Activated CD8-positive, alpha-beta T cell treated with anti-CD3 and anti-CD28 coated beads for 36 hours (primary cell): ENCODE measurements at regions of chr3 and their contacts with region 1.

Region 1: GRCh38 chr3:59386165-59386564 is 336.3 kb upstream of the CFAP20DC start:
- DNase-seq: peak; percentile 6
- ATAC-seq: peak; percentile 34
- H3K4me3 Mint-ChIP-seq: no peak overlapping the region
- H3K27ac Mint-ChIP-seq: peak overlapping the region; percentile 99
- H3K4me1 Mint-ChIP-seq: peaks cover 87% of the 10 kb centered on the region
- H3K27me3 Mint-ChIP-seq: no peaks in the 10 kb centered on the region
- CTCF ChIP-seq: no peak

Region 2: DNA sequence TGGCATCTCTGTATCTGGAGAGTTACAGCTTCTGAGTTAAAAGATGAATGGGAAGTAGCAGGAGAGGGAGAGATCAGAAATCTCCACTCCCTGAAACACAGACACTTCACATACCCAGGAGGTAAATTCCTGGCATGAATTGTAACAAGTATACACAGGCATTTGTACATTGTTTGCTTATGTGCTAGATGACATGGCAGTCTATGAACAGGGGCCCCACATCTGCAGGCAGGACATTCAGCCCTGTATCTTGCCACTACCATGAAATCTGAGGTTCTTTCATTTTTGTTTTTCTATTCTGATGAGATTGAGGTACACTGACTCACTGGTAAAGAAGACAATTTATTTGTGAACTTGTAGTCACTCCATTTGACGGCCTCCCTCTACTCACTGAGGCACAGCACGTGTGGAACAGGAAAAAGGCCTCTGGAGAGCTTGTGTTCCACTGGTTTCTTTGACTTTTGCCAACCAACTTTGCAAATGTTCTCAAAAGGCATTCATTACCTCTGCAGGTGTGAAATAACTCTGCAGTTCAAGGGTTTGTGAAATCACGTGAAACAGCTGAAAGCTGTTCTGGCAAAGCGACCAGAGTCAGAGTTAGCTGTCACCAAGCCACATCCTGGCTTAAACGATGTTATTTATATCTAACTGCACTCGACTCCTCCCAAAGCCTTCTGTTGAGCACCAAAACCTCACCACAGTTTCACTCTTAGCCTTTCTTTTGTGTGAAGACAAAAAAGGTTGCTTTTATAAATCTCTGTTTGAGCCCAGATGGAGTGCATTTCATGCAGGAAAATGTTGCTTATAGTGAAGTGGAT is 65.0 kb after region 1 on chr3:
- CTCF ChIA-PET with region 1: no interaction called
- POLR2A ChIA-PET with region 1: no interaction called
- intact Hi-C with region 1: loop called (anchors 5 kb)
- DNase-seq: peak; percentile 80
- ATAC-seq: peak; percentile 90
- H3K4me3 Mint-ChIP-seq: peak overlapping the region; percentile 55
- H3K27ac Mint-ChIP-seq: peak overlapping the region; percentile 98
- H3K4me1 Mint-ChIP-seq: peaks cover 78% of the 10 kb centered on the region
- H3K27me3 Mint-ChIP-seq: no peaks in the 10 kb centered on the region
- CTCF ChIP-seq: no peak

Region 3: GRCh38 chr3:59559721-59560435 is 173.7 kb after region 1 on chr3:
- CTCF ChIA-PET with region 1: no interaction called
- POLR2A ChIA-PET with region 1: no interaction called
- intact Hi-C with region 1: loop called (anchors 5 kb)
- DNase-seq: peak; percentile 62
- ATAC-seq: peak; percentile 97
- H3K4me3 Mint-ChIP-seq: no peak overlapping the region
- H3K27ac Mint-ChIP-seq: peak overlapping the region; percentile 93
- H3K4me1 Mint-ChIP-seq: peaks cover 26% of the 10 kb centered on the region
- H3K27me3 Mint-ChIP-seq: no peaks in the 10 kb centered on the region
- CTCF ChIP-seq: no peak